Activated B cell treated with CpG ODN at 0.5 μM for 24 hours (primary cell): ENCODE measurements at regions of chr15 and their contacts with region 1.

Region 1: DNA sequence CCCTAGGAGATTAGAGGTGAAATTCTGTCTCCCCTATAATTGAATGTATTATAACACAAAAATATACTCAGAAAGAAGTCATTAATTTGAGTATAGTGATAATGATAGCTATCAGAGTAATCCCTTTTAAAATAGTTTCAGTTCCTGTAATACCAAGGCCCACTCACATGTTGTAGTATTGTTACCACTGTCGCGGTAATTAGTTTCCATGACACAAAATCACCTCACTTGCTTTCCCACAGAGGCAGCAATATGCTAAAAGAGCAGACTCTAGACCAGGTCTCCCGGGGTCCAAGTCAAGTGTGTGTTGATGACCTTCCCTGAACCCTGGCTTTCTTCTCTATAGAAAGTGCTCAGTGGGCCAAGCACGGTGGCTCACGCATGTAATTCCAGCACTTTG is 39.5 kb upstream of the NSMCE3 start:
- DNase-seq: no peak
- ATAC-seq: peak; percentile 70
- H3K4me3 Mint-ChIP-seq: no peak overlapping the region
- H3K27ac Mint-ChIP-seq: peak overlapping the region; percentile 20
- H3K4me1 Mint-ChIP-seq: peaks cover 24% of the 10 kb centered on the region
- H3K27me3 Mint-ChIP-seq: peaks cover 5% of the 10 kb centered on the region
- CTCF ChIP-seq: no peak

Region 2: GRCh38 chr15:29324746-29325145 is 15.6 kb after region 1 on chr15:
- CTCF ChIA-PET with region 1: no interaction called
- POLR2A ChIA-PET with region 1: interaction called, 4 read pairs
- intact Hi-C with region 1: loop called (anchors 1 kb)
- DNase-seq: no peak
- ATAC-seq: no peak
- H3K4me3 Mint-ChIP-seq: no peak overlapping the region
- H3K27ac Mint-ChIP-seq: no peak overlapping the region
- H3K4me1 Mint-ChIP-seq: peaks cover 24% of the 10 kb centered on the region
- H3K27me3 Mint-ChIP-seq: no peaks in the 10 kb centered on the region
- CTCF ChIP-seq: no peak